ENCODE measurements at regions of chr19 and their contacts with region 1.

Region 1: GRCh38 chr19:12983542-12984142 is 11.6 kb upstream of the NFIX start:
- DNase-seq: peak; percentile 70 to 85
- ATAC-seq: peak; percentile 73 to 89 (median 82)
- H3K4me3 ChIP-seq: peak overlapping the region in 9 of 10 donors; percentile 17 to 47 (median 38)
- H3K27ac ChIP-seq: peak overlapping the region in 3 of 10 donors; percentile 0 to 44 (median 31)
- H3K4me1 ChIP-seq: peaks cover 3 to 29% (median 24%) of the 10 kb centered on the region in 9 donors
- H3K27me3 ChIP-seq: no peaks in the 10 kb centered on the region
- CTCF ChIP-seq: peak; percentile 91 to 99 (median 97)

Region 2: GRCh38 chr19:12666265-12667048 is 317.2 kb before region 1 on chr19 and contains the starts of genes MAN2B1 and WDR83:
- intact Hi-C with region 1: no loop called
- DNase-seq: peak; percentile 76 to 78
- ATAC-seq: peak; percentile 83 to 90 (median 88)
- H3K4me3 ChIP-seq: peak within 1 kb of the TSS; percentile 65 to 99 (median 89)
- H3K27ac ChIP-seq: peak within 1 kb of the TSS in 9 of 10 donors; percentile 68 to 91 (median 80)
- H3K4me1 ChIP-seq: peaks cover 17 to 51% (median 41%) of the 10 kb centered on the region in 9 donors
- H3K27me3 ChIP-seq: no peaks in the 10 kb centered on the region
- CTCF ChIP-seq: peak in 1 of 9 donors; percentile 4
- total RNA-seq, gene MAN2B1: 14.2 to 89.9 (median 25.5) TPM
- total RNA-seq, gene WDR83: 5.5 to 10.7 (median 7.9) TPM

Region 3: GRCh38 chr19:13033819-13034611 is 50.4 kb after region 1 on chr19:
- intact Hi-C with region 1: loop called in 7 of 10 experiments (anchors 2 to 10 kb)
- DNase-seq: peak; percentile 85
- ATAC-seq: peak; percentile 50 to 73 (median 58)
- H3K4me3 ChIP-seq: no peak overlapping the region
- H3K27ac ChIP-seq: peak overlapping the region in 9 of 10 donors; percentile 24 to 96 (median 79)
- H3K4me1 ChIP-seq: peaks cover 56 to 100% (median 92%) of the 10 kb centered on the region in 9 donors
- H3K27me3 ChIP-seq: no peaks in the 10 kb centered on the region
- CTCF ChIP-seq: peak; percentile 58 to 86 (median 82)

Region 4: DNA sequence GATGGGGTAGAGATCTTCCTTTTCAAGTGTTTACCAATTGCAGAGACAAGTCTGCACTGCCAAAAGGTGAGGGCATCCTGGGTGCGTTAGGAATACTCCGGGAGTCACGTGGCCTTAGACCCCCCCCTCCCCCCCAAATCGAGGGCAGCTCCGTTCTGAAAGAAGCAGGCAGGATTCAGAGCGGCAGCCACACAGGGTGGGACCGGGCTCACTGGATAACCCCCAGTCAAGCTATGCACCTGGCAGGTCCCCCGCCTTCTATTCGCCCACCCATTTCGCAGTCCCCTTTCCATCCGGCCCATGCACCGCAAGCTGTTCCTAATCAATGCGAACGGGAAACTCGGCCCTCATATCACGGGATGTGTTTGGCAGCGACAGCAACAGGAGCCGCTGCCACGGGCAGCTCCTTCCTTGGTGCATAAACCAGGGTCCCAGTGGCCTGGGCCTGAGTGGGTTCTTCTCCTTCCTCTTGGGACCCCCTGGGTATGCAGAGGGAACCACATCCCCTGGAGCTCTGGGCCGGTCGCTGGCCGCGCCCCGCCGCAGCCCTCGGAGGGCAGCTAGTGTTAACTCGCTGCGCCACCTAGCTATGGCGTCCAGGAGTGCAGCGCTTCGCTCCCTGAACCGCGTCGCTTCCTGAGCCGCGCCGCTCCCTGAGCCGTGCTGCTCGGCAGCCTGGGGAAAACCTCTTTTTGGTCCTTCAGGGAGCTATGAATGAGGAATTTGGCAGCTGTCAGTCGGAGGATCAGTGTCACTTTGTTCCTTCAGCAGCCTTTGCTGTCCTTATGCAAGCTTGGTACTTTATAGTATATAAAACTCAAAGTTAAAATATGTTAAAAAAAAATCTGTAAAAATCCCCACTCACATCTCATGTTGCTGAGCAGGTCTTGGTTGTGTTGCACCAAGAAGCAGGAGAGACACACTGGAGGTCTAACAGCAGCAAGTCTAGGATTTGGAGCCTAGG is 77.6 kb after region 1 on chr19:
- intact Hi-C with region 1: loop called in 7 of 10 experiments (anchors 1 to 10 kb)
- DNase-seq: peak; percentile 89 to 91
- ATAC-seq: peak; percentile 70 to 87 (median 78)
- H3K4me3 ChIP-seq: peak overlapping the region in 9 of 10 donors; percentile 33 to 56 (median 49)
- H3K27ac ChIP-seq: peak overlapping the region; percentile 67 to 99 (median 96)
- H3K4me1 ChIP-seq: peaks cover 75 to 100% (median 100%) of the 10 kb centered on the region in 9 donors
- H3K27me3 ChIP-seq: no peaks in the 10 kb centered on the region
- CTCF ChIP-seq: peak; percentile 95 to 99 (median 98)

Region 5: DNA sequence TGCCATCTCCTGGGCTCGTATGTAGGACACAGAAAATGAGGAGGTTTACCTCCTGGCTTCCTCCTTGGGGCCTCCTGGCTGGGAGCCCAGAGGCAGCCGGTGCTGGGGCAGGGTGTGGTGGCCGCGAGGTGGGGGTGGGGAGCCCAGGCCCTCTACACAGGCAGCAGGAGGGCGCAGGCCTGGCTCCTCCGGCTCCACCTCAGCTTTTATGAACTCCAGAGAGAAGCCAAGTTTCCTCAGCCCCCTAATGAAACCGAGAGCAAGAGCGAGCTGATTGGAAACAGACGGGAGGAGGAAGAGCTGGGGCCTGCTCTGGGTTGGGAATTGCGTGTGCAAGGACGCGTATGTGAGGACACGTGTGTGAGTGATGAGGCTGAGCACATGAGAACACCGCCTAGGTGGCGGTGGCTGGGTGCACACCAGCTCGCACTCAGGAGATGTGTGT is 95.9 kb after region 1 on chr19:
- intact Hi-C with region 1: loop called in 2 of 10 experiments (anchors 5 kb)
- DNase-seq: peak in 1 of 2 donors; percentile 71
- ATAC-seq: peak; percentile 27 to 75 (median 57)
- H3K4me3 ChIP-seq: peak overlapping the region in 1 of 10 donors; percentile 7
- H3K27ac ChIP-seq: peak overlapping the region; percentile 53 to 87 (median 76)
- H3K4me1 ChIP-seq: peaks cover 36 to 74% (median 48%) of the 10 kb centered on the region in 9 donors
- H3K27me3 ChIP-seq: no peaks in the 10 kb centered on the region
- CTCF ChIP-seq: peak in 1 of 9 donors; percentile 22

Region 6: GRCh38 chr19:13093407-13094105 is 109.9 kb after region 1 on chr19:
- intact Hi-C with region 1: loop called in 9 of 10 experiments (anchors 1 to 5 kb)
- DNase-seq: peak; percentile 83
- ATAC-seq: peak; percentile 57 to 80 (median 67)
- H3K4me3 ChIP-seq: no peak overlapping the region
- H3K27ac ChIP-seq: peak overlapping the region; percentile 43 to 96 (median 90)
- H3K4me1 ChIP-seq: peaks cover 43 to 96% (median 83%) of the 10 kb centered on the region in 9 donors
- H3K27me3 ChIP-seq: no peaks in the 10 kb centered on the region
- CTCF ChIP-seq: peak; percentile 94 to 98 (median 96)

Region 7: DNA sequence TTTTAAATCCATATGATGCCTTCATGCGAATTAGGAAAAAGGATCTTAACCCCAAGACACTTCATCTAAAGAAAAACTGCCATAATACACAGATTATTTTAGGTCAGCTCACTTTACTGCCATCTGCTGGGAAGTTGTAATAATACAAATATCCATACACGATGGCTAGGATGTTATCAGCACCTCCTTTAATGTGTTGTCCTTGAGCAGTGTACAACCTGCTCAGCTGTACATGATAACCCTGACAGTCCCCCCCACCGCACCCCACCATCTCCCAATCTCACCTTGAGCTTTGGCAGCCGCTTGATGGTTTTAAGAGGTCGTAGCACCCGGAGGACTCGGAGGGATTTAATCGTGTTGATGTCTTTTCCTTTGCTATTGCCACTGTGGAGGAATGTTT is 278.8 kb after region 1 on chr19:
- intact Hi-C with region 1: loop called in 9 of 10 experiments (anchors 1 to 10 kb)
- DNase-seq: no peak
- ATAC-seq: peak; percentile 33 to 75 (median 58)
- H3K4me3 ChIP-seq: no peak overlapping the region
- H3K27ac ChIP-seq: no peak overlapping the region
- H3K4me1 ChIP-seq: peaks cover 0 to 18% (median 0%) of the 10 kb centered on the region in 9 donors
- H3K27me3 ChIP-seq: peaks cover 0 to 5% (median 0%) of the 10 kb centered on the region in 7 donors
- CTCF ChIP-seq: peak in 8 of 9 donors; percentile 39 to 76 (median 66)